GM13977 (cell line): ENCODE measurements at regions of chr16 and their contacts with region 1.

Region 1: DNA sequence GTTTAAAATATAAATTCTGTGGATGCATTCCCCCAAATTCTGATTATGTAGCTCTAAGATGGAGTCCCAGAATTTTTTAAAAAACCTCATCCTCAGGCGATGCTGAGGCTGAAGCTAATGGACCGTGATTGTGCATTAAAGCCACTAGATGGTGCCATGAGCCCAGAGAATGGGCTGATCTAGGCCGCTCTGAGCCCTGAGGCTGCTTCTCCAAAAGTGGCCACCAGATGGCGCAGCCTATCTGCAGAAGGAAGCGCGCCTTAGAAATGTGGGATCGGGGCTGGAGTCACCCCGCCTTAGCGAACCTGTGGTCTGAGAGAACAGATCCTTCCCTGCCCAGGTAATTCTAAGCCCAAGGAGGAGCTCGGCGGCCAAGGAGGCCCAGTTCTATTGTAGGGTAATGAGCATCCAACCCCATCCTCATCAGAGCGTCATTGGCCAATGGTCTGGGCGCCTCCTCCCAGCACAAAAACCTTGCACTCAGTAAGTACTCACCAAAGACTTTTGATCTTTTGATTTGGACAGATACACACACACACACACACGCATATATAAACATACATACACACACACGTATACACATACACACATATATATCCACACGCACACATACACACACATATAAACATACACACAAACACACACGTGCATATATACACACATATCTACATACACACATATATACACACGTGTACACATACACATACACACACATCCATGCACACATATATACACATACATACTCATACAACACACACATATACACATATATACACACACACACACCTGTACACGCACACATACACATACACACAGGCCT is 13.7 kb upstream of the MMP2 start:
- DNase-seq: peak; percentile 81
- CTCF ChIP-seq: peak; percentile 99

Region 2: GRCh38 chr16:55542459-55543082 is 77.3 kb after region 1 on chr16:
- in situ Hi-C with region 1: no loop called
- DNase-seq: no peak
- CTCF ChIP-seq: no peak

Region 3: DNA sequence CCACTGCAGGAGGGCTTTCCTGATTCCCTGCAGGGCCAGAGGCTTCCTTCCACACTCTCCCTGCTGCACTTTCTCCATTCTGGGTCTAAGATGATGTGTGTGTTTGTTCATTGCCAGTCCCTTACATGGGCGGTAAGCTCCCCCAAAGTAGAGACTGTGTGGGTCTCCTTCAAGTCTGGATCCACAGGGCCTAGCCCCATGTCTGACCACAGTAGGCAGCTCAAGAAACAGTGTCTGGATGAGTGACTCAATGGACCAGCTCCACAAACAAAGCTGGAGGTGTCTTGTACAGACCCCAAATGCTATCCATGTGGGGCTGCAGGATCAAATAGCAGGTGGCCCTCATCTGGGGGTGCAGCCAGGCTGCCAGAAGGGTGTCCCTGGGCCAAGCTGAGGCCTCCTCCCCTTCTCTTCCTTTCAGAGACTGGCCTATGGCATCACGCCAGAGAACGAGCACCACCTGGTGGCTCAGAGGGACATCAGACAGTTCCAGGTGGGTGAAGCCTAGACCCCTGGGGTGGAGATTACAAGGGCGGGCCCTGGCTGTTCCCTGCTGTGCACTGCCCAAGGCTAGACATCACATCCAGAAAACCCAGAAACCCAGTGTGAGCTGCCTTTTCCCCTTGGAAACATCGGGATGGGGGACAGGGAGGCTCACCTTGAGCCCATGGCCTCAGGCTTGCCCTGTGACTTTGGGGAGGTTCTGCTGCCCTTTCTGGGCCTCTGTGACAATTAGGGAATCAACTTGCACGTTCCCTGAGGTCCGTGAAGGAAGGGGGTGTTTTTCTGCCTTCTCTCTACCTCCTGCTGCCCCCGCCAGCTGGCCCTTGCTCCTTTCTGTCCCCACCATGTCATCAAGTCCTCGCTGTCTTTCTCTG is 236.4 kb after region 1 on chr16:
- in situ Hi-C with region 1: loop called (anchors 10 kb)
- DNase-seq: peak; percentile 50
- CTCF ChIP-seq: peak; percentile 75

Region 4: GRCh38 chr16:55842369-55843104 is 377.2 kb after region 1 on chr16:
- in situ Hi-C with region 1: loop called (anchors 10 kb)
- DNase-seq: peak; percentile 65
- CTCF ChIP-seq: peak; percentile 67